Motor neuron (in vitro differentiated cells): ENCODE measurements at regions of chr14 and their contacts with region 1.

Region 1: DNA sequence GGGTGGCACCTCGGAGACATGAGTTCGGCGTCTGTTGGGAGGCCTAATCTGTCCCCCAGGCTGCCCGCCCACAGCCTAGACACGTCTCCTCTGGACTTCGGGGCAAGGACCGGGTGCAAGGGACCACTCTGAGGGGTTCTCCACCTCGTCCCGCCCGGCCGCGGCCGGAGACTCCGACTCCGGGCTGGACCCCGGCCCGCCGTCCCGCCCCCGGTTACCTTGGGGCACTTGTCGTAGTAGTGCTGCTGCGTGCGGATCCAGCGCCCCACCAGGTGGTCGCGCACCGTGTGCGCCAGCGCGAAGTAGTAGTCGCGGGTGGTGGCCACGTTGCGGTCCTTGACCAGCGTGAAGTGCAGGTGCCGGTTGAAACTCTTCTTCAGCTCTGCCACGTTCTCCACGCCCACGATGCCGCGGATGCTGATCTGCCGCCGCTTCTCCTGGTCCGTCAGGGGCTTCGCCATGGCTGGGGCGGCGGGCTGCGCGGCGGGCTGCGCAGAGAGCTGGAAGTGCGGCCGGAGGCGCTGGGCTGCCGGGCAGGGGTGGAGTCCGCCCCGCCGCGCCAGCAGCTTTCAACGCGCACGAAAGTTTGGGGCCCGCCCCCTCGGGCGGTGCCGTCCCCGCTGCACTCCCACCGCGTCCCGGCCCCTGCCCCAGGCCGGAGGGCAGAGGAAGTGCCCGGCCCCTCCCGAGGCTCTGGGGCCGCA is at the start of gene PYGL:
- ATAC-seq: peak; percentile 76 to 91 (median 86)
- H3K4me3 ChIP-seq: peak within 1 kb of the TSS; percentile 31 to 47 (median 39)
- H3K27ac ChIP-seq: no peak within 1 kb of the TSS
- H3K4me1 ChIP-seq: peaks cover 5 to 9% of the 10 kb centered on the region in 2 donors
- total RNA-seq, gene PYGL: 2.2 to 164 (median 5.7) TPM

Region 2: GRCh38 chr14:50396631-50397390 is 547.3 kb before region 1 on chr14 and contains the start of gene CDKL1:
- in situ Hi-C with region 1: no loop called
- ATAC-seq: peak; percentile 84 to 94 (median 92)
- H3K4me3 ChIP-seq: peak within 1 kb of the TSS; percentile 43 to 52 (median 47)
- H3K27ac ChIP-seq: peak within 1 kb of the TSS in 1 of 2 donors; percentile 4
- H3K4me1 ChIP-seq: peaks cover 0 to 7% of the 10 kb centered on the region in 2 donors
- total RNA-seq, gene CDKL1: 1.2 to 8.4 (median 2.5) TPM

Region 3: GRCh38 chr14:50677527-50678063 is 266.5 kb before region 1 on chr14:
- in situ Hi-C with region 1: no loop called
- ATAC-seq: peak in 2 of 8 experiments; percentile 63 to 91
- H3K4me3 ChIP-seq: no peak overlapping the region
- H3K27ac ChIP-seq: no peak overlapping the region
- H3K4me1 ChIP-seq: no peaks in the 10 kb centered on the region

Region 4: GRCh38 chr14:50860478-50861086 is 83.5 kb before region 1 on chr14:
- in situ Hi-C with region 1: no loop called
- ATAC-seq: peak in 6 of 8 experiments; percentile 16 to 63 (median 39)
- H3K4me3 ChIP-seq: peak overlapping the region; percentile 7 to 40 (median 18)
- H3K27ac ChIP-seq: peak overlapping the region in 1 of 2 donors; percentile 76
- H3K4me1 ChIP-seq: peaks cover 27 to 28% of the 10 kb centered on the region in 2 donors

Region 5: DNA sequence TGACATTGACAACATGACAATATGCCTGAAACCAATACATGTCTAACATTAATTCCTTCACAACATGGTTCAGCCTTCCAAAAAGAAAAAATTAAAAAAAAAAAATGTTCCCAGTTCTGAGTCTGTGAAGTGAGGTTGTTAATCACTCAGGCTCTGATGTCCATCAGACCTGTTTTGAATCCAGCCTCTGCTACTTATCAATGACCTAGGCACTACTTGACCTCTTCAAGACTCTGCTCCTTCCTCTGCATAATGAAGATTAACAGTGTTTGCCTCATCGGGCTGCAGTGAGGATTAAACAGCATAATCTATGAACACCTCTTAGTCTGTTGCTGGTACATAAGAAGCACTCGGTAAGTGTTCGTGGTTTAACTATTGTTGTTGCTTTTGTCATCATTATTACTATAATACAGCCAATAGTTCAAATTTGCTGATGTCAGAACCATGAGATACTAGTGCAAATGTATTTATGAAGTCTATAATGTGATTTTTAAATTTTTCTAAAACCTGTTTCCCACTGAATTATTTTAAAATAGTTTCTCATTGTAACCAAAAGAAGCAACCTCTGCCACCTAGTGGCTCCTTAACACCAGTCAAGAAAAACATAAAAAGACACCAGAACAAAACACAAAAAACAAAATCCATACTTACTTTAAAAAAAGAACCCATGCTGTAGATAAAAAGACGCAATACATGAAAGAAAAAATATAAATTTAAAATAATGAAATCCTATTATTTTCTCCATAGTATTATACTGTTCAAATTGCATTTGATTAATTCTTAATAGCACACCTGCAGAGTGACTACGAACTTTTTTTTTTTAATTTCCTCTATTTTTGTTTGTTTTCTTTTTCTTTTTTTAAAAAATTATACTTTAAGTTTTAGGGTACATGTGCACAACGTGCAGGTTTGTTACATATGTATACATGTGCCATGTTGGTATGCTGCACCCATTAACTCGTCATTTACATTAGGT is 275.7 kb after region 1 on chr14:
- in situ Hi-C with region 1: loop called in 1 of 9 experiments (anchors 25 kb)
- ATAC-seq: no peak
- H3K4me3 ChIP-seq: no peak overlapping the region
- H3K27ac ChIP-seq: no peak overlapping the region
- H3K4me1 ChIP-seq: no peaks in the 10 kb centered on the region